OCI-LY7 (cell line): ENCODE measurements at regions of chr11 and their contacts with region 1.

Region 1: GRCh38 chr11:67507864-67508485 is at the start of gene CDK2AP2:
- DNase-seq: peak; percentile 100
- H3K4me3 ChIP-seq: peak within 1 kb of the TSS; percentile 88
- H3K27ac ChIP-seq: peak within 1 kb of the TSS; percentile 70
- H3K4me1 ChIP-seq: peaks cover 38% of the 10 kb centered on the region
- CTCF ChIP-seq: no peak
- total RNA-seq, gene CDK2AP2: 57.0 and 71.5 TPM in 2 replicates

Region 2: GRCh38 chr11:67353317-67354074 is 154.5 kb before region 1 on chr11 and contains the start of gene POLD4:
- CTCF ChIA-PET with region 1: no interaction called
- POLR2A ChIA-PET with region 1: no interaction called
- intact Hi-C with region 1: loop called (anchors 5 kb)
- DNase-seq: peak; percentile 99
- H3K4me3 ChIP-seq: peak within 1 kb of the TSS; percentile 77
- H3K27ac ChIP-seq: peak within 1 kb of the TSS; percentile 93
- H3K4me1 ChIP-seq: peaks cover 78% of the 10 kb centered on the region
- CTCF ChIP-seq: no peak
- total RNA-seq, gene POLD4: 146 and 153 TPM in 2 replicates

Region 3: DNA sequence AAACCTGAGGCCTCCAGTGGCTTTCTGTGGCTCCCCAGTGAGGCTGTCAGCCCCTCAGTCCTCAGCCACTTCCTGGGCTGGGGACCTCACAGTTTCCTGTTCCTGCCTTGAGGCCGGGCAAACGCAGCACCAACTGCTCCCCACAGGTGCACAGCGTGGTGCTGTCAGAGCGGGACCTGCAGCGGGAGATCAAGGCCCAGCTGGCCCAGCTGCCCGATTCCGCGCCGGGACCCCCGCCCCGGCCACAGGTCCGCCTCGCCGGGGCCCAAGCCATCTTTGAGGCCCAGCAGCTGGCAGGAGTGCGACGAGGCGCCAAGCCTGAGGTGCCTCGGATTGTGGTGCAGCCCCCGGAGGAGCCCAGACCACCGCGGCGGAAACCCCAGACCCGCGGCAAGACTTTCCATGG is 98.7 kb before region 1 on chr11:
- CTCF ChIA-PET with region 1: no interaction called
- POLR2A ChIA-PET with region 1: no interaction called
- intact Hi-C with region 1: loop called (anchors 2 kb)
- DNase-seq: peak; percentile 95
- H3K4me3 ChIP-seq: peak overlapping the region; percentile 79
- H3K27ac ChIP-seq: peak overlapping the region; percentile 97
- H3K4me1 ChIP-seq: peaks cover 88% of the 10 kb centered on the region
- CTCF ChIP-seq: no peak

Region 4: GRCh38 chr11:67439321-67439883 is 68.6 kb before region 1 on chr11:
- CTCF ChIA-PET with region 1: no interaction called
- POLR2A ChIA-PET with region 1: no interaction called
- intact Hi-C with region 1: loop called (anchors 1 kb)
- DNase-seq: no peak
- H3K4me3 ChIP-seq: peak overlapping the region; percentile 81
- H3K27ac ChIP-seq: peak overlapping the region; percentile 94
- H3K4me1 ChIP-seq: peaks cover 80% of the 10 kb centered on the region
- CTCF ChIP-seq: peak; percentile 72

Region 5: GRCh38 chr11:67482825-67483798 is 24.9 kb before region 1 on chr11 and contains the start of gene AIP:
- CTCF ChIA-PET with region 1: no interaction called
- POLR2A ChIA-PET with region 1: no interaction called
- intact Hi-C with region 1: loop called (anchors 2 kb)
- DNase-seq: peak; percentile 99
- H3K4me3 ChIP-seq: peak within 1 kb of the TSS; percentile 71
- H3K27ac ChIP-seq: peak within 1 kb of the TSS; percentile 87
- H3K4me1 ChIP-seq: peaks cover 44% of the 10 kb centered on the region
- CTCF ChIP-seq: no peak
- total RNA-seq, gene AIP: 123 and 125 TPM in 2 replicates

Region 6: GRCh38 chr11:67648140-67649123 is 140.5 kb after region 1 on chr11:
- CTCF ChIA-PET with region 1: no interaction called
- POLR2A ChIA-PET with region 1: no interaction called
- intact Hi-C with region 1: loop called (anchors 5 kb)
- DNase-seq: peak; percentile 95
- H3K4me3 ChIP-seq: peak overlapping the region; percentile 70
- H3K27ac ChIP-seq: peak overlapping the region; percentile 97
- H3K4me1 ChIP-seq: peaks cover 85% of the 10 kb centered on the region
- CTCF ChIP-seq: peak; percentile 89